CD8-positive, alpha-beta T cell (primary cell): ENCODE measurements at regions of chr4 and their contacts with region 1.

Region 1: DNA sequence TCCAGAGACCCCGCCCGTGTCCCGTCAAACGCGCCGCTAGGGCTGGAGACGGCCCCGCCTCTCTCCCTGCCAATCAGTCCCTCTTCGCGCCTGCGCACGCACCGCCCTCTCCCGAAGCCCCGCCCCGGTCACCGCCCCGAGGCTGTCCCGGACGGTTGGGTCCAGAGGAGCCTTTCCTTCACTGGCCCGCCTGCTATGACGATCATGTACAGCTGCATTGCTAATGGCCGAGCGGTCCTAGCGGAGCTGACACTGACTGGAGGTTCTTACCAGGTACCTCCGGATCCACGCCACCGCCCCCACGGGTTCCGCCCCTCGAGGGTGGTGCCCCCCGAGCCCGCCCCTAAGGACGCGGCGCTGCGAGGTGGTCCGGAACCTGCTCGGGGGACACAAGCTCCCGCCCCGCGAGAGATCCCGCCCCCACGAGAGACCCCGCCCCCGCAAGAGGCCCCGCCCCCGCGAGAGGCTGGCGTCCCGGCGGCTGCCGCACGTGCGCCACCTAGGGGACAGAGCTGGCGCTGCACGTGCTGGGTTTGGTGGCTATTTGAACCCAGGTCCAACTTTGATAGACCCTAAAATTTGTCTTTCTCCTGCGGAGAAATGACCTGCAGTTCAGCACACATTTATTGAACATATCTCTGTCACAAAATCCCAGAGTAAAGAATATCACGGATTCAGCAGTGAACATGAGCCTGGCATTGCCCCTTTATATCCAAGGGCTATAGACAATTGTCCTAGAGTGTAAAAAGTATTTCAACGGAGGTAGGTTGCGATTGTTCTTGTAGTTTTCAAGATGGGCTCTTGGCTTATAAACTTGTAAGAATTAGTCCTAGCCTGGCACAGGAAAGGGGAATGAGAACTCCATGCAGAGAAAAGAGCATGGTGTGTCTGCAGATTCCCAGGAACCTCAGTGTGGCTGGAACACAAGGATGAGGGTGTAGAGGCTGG is 88.7 kb downstream of the HNRNPD start:
- DNase-seq: peak; percentile 98 to 99 (median 99)
- ATAC-seq: peak; percentile 91
- H3K4me3 ChIP-seq: peak overlapping the region; percentile 57 to 63
- H3K4me3 Mint-ChIP-seq: peak overlapping the region; percentile 88
- H3K27ac ChIP-seq: peak overlapping the region; percentile 43 to 68
- H3K27ac Mint-ChIP-seq: peak overlapping the region; percentile 41
- H3K4me1 ChIP-seq: peaks cover 12% of the 10 kb centered on the region
- H3K4me1 Mint-ChIP-seq: peaks cover 15% of the 10 kb centered on the region
- H3K27me3 ChIP-seq: peaks cover 0 to 5% of the 10 kb centered on the region in 2 experiments
- H3K27me3 Mint-ChIP-seq: no peaks in the 10 kb centered on the region
- CTCF ChIP-seq: peak; percentile 97

Region 2: GRCh38 chr4:80926446-80926845 is 1358.7 kb before region 1 on chr4:
- CTCF ChIA-PET with region 1: no interaction called
- POLR2A ChIA-PET with region 1: no interaction called
- intact Hi-C with region 1: no loop called
- DNase-seq: no peak
- ATAC-seq: no peak
- H3K4me3 ChIP-seq: no peak overlapping the region
- H3K4me3 Mint-ChIP-seq: no peak overlapping the region
- H3K27ac ChIP-seq: no peak overlapping the region
- H3K27ac Mint-ChIP-seq: no peak overlapping the region
- H3K4me1 ChIP-seq: no peaks in the 10 kb centered on the region
- H3K4me1 Mint-ChIP-seq: no peaks in the 10 kb centered on the region
- H3K27me3 ChIP-seq: no peaks in the 10 kb centered on the region
- H3K27me3 Mint-ChIP-seq: no peaks in the 10 kb centered on the region
- CTCF ChIP-seq: no peak

Region 3: DNA sequence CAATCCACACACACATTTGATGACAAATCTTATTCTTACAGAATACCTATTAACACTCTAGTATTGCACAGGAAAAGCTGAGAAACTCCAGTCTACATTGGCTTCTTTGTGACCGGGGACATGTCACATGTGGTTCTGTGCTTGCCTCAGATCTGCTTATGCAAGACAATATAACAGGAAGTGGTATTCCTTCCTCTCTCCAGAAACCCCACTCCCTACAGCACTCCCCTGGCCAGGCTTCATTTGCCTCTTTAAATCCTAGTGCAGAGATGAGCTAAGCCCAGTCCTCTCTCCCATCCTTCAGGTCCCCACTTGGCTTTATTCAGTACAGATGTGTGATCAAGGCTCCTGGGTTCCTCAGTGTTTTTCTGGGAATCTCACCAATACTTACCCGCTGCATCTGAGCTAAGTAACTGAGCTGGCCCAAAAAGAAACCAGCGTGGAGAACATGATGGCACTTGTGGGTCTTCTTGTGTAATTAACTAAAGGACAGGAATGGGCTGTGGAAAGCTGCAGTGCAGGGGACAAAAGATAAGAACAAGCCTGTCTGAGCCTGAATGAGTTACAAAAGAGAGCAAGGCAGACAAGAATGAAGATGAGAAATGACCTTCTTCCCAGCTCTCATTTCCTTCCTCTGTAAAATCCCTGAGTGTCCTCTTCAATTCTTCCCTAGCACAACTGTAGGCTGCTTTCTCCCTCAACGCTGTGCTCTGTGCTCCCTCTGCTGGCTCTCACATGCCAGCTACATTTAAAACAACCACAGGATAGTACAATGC is 16.9 kb before region 1 on chr4:
- CTCF ChIA-PET with region 1: interaction called, 36 read pairs
- POLR2A ChIA-PET with region 1: interaction called, 4 read pairs
- intact Hi-C with region 1: no loop called
- DNase-seq: peak in 8 of 9 experiments; percentile 15 to 71 (median 46)
- ATAC-seq: peak; percentile 94
- H3K4me3 ChIP-seq: no peak overlapping the region
- H3K4me3 Mint-ChIP-seq: no peak overlapping the region
- H3K27ac ChIP-seq: no peak overlapping the region
- H3K27ac Mint-ChIP-seq: no peak overlapping the region
- H3K4me1 ChIP-seq: peaks cover 11% of the 10 kb centered on the region
- H3K4me1 Mint-ChIP-seq: peaks cover 16% of the 10 kb centered on the region
- H3K27me3 ChIP-seq: no peaks in the 10 kb centered on the region
- H3K27me3 Mint-ChIP-seq: peaks cover 6% of the 10 kb centered on the region
- CTCF ChIP-seq: peak; percentile 79

Region 4: DNA sequence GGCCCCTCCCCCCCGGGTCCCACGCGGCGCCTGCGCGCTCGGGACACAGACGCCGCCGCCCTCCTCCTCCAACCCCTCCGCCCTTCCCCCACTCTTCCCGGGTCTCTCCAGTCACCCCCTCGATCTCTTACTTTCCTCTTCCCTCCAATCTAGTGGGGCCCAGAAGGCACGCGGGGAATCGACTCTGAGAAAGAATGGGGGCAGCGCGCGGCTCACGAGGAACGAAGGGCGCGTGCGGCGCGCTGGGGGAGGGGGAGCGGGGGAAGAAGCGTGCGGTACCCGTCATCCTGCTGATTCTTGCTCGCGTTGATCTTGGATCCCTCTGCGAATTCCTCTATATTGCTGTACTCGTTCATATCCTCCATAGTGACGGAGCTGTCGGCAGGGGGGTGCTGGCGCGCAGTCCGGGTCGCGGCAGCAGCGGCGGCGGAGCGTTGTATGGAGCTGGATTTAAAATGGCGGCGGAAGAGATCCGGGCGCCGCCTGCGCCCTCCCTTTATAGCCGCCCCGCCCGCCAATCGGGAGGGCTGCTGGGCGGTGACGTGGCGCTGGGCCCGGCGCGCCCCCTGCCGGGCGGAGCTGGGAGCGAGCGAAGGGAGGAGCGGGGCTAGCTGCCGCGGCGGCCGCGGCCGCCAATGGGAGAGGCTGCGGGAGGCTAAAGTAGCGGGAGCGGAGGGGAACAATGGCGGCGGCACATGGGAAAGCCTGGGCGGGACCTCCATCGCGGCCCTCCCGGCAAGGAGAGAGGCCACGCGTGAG is 144.0 kb after region 1 on chr4:
- CTCF ChIA-PET with region 1: no interaction called
- POLR2A ChIA-PET with region 1: interaction called, 25 read pairs
- intact Hi-C with region 1: loop called (anchors 1 to 2 kb)
- DNase-seq: peak; percentile 87 to 96 (median 93)
- ATAC-seq: peak; percentile 62
- H3K4me3 ChIP-seq: peak overlapping the region; percentile 91 to 99
- H3K4me3 Mint-ChIP-seq: peak overlapping the region; percentile 100
- H3K27ac ChIP-seq: peak overlapping the region; percentile 99 to 100
- H3K27ac Mint-ChIP-seq: peak overlapping the region; percentile 99
- H3K4me1 ChIP-seq: peaks cover 40% of the 10 kb centered on the region
- H3K4me1 Mint-ChIP-seq: peaks cover 72% of the 10 kb centered on the region
- H3K27me3 ChIP-seq: no peaks in the 10 kb centered on the region
- H3K27me3 Mint-ChIP-seq: no peaks in the 10 kb centered on the region
- CTCF ChIP-seq: peak; percentile 90

Region 5: DNA sequence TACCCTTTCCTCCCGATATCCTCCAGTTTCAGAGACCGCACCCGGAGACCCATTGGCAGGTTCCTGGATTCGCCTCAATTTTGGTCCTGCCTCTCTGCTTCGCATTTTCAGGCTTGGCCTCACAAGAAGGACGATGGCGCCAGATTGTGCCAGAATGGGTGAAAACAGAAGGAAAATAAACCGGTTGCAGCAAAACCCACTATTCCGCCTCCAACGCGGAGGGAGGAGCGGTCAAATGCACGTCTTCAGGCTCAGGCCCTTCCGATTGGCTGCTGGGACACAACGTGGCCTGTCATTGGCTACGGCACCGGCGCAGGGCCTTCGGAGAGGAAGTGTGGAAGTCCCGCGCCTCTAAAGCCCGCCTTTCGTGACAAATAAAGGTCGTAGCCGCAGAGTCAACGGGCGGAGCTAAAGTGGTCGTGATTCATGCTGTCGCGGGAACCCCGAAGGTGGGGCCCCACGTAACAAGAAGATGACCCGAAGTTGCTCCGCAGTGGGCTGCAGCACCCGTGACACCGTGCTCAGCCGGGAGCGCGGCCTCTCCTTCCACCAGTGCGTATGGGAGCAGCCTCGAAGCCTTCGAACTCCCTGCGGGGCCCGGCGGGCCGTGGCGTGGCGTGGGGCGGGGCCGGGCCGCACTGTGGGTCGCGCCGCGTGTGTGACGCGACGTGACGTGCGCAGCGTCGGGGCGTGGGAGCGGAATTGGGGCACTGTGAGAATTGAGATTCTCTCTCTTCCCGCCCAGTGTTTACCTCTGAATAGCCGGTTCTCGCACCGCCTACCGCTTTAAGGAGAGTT is 615.4 kb after region 1 on chr4 and contains the start of gene THAP9:
- CTCF ChIA-PET with region 1: no interaction called
- POLR2A ChIA-PET with region 1: no interaction called
- intact Hi-C with region 1: loop called (anchors 5 to 10 kb)
- DNase-seq: peak; percentile 95 to 100 (median 97)
- ATAC-seq: peak; percentile 88
- H3K4me3 ChIP-seq: peak within 1 kb of the TSS; percentile 73 to 84
- H3K4me3 Mint-ChIP-seq: no peak within 1 kb of the TSS
- H3K27ac ChIP-seq: peak within 1 kb of the TSS; percentile 93 to 99
- H3K27ac Mint-ChIP-seq: no peak within 1 kb of the TSS
- H3K4me1 ChIP-seq: peaks cover 30% of the 10 kb centered on the region
- H3K4me1 Mint-ChIP-seq: peaks cover 21% of the 10 kb centered on the region
- H3K27me3 ChIP-seq: no peaks in the 10 kb centered on the region
- H3K27me3 Mint-ChIP-seq: no peaks in the 10 kb centered on the region
- CTCF ChIP-seq: no peak
- total RNA-seq, gene THAP9: 5.2 to 7.3 TPM

Region 6: DNA sequence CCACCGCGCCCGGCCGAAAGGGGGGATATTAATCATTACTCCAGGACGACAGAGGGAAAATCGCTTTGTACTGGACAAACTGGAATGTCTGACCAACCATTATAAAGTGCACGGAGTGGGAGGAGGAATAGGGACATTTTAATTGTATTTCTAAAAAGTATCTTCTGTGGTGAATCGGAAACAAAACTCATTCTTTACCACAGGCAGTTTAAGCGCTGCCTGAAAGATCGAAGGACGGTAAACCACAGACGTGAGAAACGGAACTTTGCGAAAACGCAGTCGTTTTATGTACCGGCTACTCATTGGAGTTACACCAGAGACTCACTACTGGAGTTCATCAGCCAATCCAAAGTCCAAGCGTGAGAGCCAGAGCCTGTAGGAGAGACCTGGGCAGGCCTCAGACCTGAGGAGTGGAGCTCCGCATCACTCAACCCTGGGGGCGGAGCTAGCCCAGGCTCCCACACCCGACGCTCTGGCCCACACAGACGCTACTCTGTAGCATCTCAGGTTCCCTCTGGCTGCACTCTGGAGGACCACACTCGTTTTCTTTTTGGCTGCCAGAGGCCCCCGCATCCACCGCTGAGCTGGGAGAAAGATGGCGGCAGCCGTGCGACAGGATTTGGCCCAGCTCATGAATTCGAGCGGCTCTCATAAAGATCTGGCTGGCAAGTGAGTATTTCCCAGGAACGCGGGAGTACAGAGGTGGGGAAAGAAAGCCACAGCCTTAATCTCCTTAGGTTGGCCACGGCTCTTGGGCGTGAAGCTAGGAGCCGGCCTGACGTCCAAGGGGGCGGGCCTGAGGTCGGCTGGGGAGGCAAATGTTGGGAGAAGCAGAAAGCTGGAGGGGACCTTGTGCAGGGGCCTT is 749.7 kb after region 1 on chr4 and contains the start of gene COPS4:
- CTCF ChIA-PET with region 1: no interaction called
- POLR2A ChIA-PET with region 1: no interaction called
- intact Hi-C with region 1: loop called (anchors 5 to 10 kb)
- DNase-seq: peak; percentile 87 to 100 (median 94)
- ATAC-seq: peak; percentile 98
- H3K4me3 ChIP-seq: peak within 1 kb of the TSS; percentile 73 to 90
- H3K4me3 Mint-ChIP-seq: peak within 1 kb of the TSS; percentile 99
- H3K27ac ChIP-seq: peak within 1 kb of the TSS; percentile 76 to 92
- H3K27ac Mint-ChIP-seq: peak within 1 kb of the TSS; percentile 99
- H3K4me1 ChIP-seq: peaks cover 16% of the 10 kb centered on the region
- H3K4me1 Mint-ChIP-seq: peaks cover 41% of the 10 kb centered on the region
- H3K27me3 ChIP-seq: no peaks in the 10 kb centered on the region
- H3K27me3 Mint-ChIP-seq: no peaks in the 10 kb centered on the region
- CTCF ChIP-seq: peak; percentile 51
- total RNA-seq, gene COPS4: 32.2 to 35.2 TPM

Region 7: DNA sequence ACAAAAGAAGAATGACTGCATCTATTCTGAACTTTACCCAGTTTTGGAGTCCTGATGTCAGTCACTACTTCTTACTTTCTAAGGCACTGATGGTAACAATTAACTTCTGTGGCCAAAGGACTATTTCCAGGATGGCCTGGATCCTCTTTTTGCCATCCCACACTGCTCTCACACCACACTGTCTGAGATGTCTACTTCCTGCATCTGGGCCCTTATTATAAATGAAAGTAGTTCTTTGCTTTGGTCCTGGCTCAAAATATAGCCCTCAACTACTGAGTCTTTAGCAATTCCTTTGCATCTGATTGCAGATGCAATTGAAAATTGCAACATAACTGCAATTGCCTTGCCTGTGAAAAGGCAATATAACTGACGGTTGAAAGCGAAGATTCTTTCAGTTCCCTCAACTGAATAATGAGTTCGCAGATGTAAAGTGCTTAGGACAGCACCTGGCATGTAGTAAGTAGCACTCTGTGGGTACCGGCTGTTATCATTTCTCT is 955.3 kb after region 1 on chr4:
- CTCF ChIA-PET with region 1: no interaction called
- POLR2A ChIA-PET with region 1: no interaction called
- intact Hi-C with region 1: no loop called
- DNase-seq: no peak
- ATAC-seq: no peak
- H3K4me3 ChIP-seq: no peak overlapping the region
- H3K4me3 Mint-ChIP-seq: no peak overlapping the region
- H3K27ac ChIP-seq: no peak overlapping the region
- H3K27ac Mint-ChIP-seq: peak overlapping the region; percentile 73
- H3K4me1 ChIP-seq: peaks cover 23% of the 10 kb centered on the region
- H3K4me1 Mint-ChIP-seq: peaks cover 49% of the 10 kb centered on the region
- H3K27me3 ChIP-seq: no peaks in the 10 kb centered on the region
- H3K27me3 Mint-ChIP-seq: no peaks in the 10 kb centered on the region
- CTCF ChIP-seq: no peak